Naive thymus-derived CD4-positive, alpha-beta T cell (primary cell): ENCODE measurements at regions of chrX and their contacts with region 1.

Region 1: GRCh38 chrX:154051201-154051810 is 31.6 kb upstream of the IRAK1 start:
- DNase-seq: peak; percentile 33 to 76 (median 66)
- ATAC-seq: peak; percentile 87
- H3K4me3 ChIP-seq: no peak overlapping the region
- H3K4me3 Mint-ChIP-seq: peak overlapping the region in 5 of 10 donors; percentile 21 to 45 (median 30)
- H3K27ac ChIP-seq: peak overlapping the region; percentile 11
- H3K27ac Mint-ChIP-seq: peak overlapping the region in 8 of 9 donors; percentile 20 to 84 (median 49)
- H3K4me1 ChIP-seq: no peaks in the 10 kb centered on the region
- H3K4me1 Mint-ChIP-seq: peaks cover 30 to 56% (median 47%) of the 10 kb centered on the region in 7 donors
- H3K27me3 ChIP-seq: no peaks in the 10 kb centered on the region
- H3K27me3 Mint-ChIP-seq: no peaks in the 10 kb centered on the region

Region 2: DNA sequence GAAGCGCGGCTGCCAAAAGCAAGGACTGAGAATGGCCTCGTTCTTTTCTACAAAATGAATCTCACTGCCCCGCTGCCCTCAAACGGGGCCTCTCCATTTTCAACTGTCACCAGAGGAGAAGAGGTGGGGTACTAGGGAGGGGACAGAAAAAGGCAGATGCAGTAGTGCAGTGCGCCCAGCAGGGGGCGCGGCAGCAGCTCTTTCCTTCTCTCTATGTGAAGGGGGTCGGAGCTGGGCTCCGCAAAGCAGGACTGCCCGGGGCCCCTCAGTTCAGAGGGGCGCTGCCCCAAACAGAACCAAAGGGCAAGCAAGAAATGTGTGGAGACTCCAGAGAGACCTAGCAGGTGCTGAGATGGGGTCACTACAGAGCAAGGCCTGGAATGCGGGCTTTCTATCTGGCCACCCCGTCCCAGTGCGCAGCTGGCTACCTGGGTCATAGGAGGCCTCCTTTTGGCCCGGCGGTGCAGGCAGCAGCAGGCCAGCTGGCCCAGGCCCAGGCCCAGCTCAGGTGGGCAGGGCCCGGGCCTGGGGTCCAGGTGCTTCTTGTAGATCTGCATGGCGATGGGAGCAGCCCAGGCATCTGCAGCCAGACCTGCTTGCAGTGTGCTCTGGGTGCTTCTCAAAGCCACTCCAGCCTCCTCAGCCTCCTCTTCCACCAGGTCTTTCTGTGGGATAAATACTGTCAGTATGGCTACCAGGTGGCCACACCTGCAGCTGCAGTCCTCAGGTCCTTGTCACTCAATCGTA is 37.5 kb before region 1 on chrX:
- CTCF ChIA-PET with region 1: interaction called, 5 read pairs
- POLR2A ChIA-PET with region 1: no interaction called
- intact Hi-C with region 1: loop called (anchors 1 to 2 kb)
- DNase-seq: peak; percentile 24 to 66 (median 47)
- ATAC-seq: peak; percentile 83
- H3K4me3 ChIP-seq: no peak overlapping the region
- H3K4me3 Mint-ChIP-seq: no peak overlapping the region
- H3K27ac ChIP-seq: no peak overlapping the region
- H3K27ac Mint-ChIP-seq: peak overlapping the region in 4 of 9 donors; percentile 12 to 84 (median 68)
- H3K4me1 ChIP-seq: no peaks in the 10 kb centered on the region
- H3K4me1 Mint-ChIP-seq: peaks cover 0 to 17% (median 8%) of the 10 kb centered on the region in 7 donors
- H3K27me3 ChIP-seq: no peaks in the 10 kb centered on the region
- H3K27me3 Mint-ChIP-seq: no peaks in the 10 kb centered on the region